GM12878 (cell line): ENCODE measurements at regions of chrX and their contacts with region 1.

Region 1: GRCh38 chrX:111445486-111445885 is 33.5 kb upstream of the DCX start:
- DNase-seq: no peak
- ATAC-seq: peak; percentile 74
- H3K4me3 ChIP-seq: no peak overlapping the region
- H3K27ac ChIP-seq: no peak overlapping the region
- H3K4me1 ChIP-seq: no peaks in the 10 kb centered on the region
- H3K27me3 ChIP-seq: peaks cover 1 to 3% of the 10 kb centered on the region in 2 experiments; a peak in 3 of 4 replicates
- CTCF ChIP-seq: peak; percentile 51; a peak in 4 of 6 replicates
- EP300 ChIP-seq: no peak
- POLR2A ChIP-seq: no peak
- RAD21 ChIP-seq: peak; percentile 47

Region 2: DNA sequence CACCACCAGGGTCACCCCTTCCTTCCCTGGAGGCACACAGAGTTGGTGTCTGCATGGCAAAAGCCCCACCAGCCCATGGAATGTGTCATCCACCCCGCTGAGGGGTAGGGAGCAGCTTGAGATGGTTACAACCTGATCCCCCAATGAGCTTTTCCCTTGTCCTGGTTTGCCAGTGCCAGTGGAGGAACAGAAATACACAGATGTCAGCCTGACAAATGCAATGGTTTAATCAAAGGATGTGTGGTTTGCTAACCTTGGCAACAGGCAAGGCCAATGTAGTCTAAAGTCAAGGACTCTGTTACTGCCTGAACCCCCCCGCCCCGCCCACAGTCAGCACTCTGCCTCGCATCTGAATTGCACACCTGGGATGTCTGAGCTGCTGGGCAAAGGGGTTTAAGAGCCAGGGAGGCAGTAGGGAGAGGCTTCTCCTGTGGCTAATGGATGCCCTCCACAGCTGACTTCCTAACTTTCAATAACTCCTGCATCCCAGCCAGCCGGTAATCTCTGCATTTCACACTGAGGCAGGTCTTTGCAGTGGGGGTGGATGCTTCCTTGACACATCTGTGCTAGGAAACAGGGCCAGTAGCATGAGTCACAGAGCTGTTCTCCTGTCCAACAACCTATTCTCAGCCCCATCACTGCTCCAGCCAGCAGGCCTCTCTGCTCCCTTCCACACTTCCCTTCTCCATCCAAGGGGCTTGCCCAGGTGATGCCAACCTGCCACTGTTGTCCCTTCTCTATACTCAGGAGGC is 1265.1 kb before region 1 on chrX:
- CTCF ChIA-PET with region 1: no interaction called
- POLR2A ChIA-PET with region 1: no interaction called
- RAD21 ChIA-PET with region 1: no interaction called
- SMC1A ChIA-PET with region 1: no interaction called
- in situ Hi-C with region 1: no loop called
- intact Hi-C with region 1: no loop called
- DNase-seq: no peak
- ATAC-seq: no peak; the same call in 2 of the 3 replicates
- H3K4me3 ChIP-seq: no peak overlapping the region
- H3K27ac ChIP-seq: no peak overlapping the region
- H3K4me1 ChIP-seq: peaks cover 4% of the 10 kb centered on the region
- H3K27me3 ChIP-seq: no peaks in the 10 kb centered on the region
- CTCF ChIP-seq: no peak
- EP300 ChIP-seq: no peak
- POLR2A ChIP-seq: no peak
- RAD21 ChIP-seq: no peak

Region 3: GRCh38 chrX:110992611-110993010 is 452.9 kb before region 1 on chrX:
- CTCF ChIA-PET with region 1: interaction called, 3 read pairs
- POLR2A ChIA-PET with region 1: no interaction called
- RAD21 ChIA-PET with region 1: no interaction called
- SMC1A ChIA-PET with region 1: interaction called, 5 read pairs
- in situ Hi-C with region 1: no loop called
- intact Hi-C with region 1: loop called (anchors 10 kb)
- DNase-seq: no peak
- ATAC-seq: peak; percentile 76
- H3K4me3 ChIP-seq: no peak overlapping the region
- H3K27ac ChIP-seq: no peak overlapping the region
- H3K4me1 ChIP-seq: no peaks in the 10 kb centered on the region
- H3K27me3 ChIP-seq: no peaks in the 10 kb centered on the region
- CTCF ChIP-seq: peak; percentile 49 to 61 (median 56)
- EP300 ChIP-seq: no peak
- POLR2A ChIP-seq: no peak
- RAD21 ChIP-seq: peak; percentile 40; the same call in 1 of the 2 replicates

Region 4: DNA sequence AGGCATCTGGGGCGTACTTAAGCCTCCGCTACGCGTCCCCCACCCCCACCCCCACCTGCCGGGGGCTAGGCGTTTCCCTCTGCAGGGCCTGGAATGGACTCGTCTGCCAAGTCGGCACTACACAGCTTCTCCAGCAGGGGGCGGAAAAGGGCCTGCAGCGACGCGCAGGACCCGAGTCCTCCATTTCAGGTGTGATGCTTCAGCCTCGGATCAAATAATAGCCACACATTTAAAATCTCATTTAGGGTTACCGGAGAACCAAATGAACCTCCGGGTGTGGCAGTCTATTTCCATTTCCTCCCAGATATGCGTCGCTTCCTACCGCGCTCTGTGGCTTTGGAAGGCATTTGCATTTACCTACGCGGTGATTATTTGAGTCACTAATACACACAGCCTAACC is 346.6 kb before region 1 on chrX:
- CTCF ChIA-PET with region 1: interaction called, 7 read pairs
- POLR2A ChIA-PET with region 1: no interaction called
- RAD21 ChIA-PET with region 1: no interaction called
- SMC1A ChIA-PET with region 1: interaction called, 3 read pairs
- in situ Hi-C with region 1: no loop called
- intact Hi-C with region 1: loop called (anchors 5 kb)
- DNase-seq: no peak
- ATAC-seq: peak; percentile 88
- H3K4me3 ChIP-seq: no peak overlapping the region
- H3K27ac ChIP-seq: no peak overlapping the region
- H3K4me1 ChIP-seq: no peaks in the 10 kb centered on the region
- H3K27me3 ChIP-seq: peaks cover 0 to 3% of the 10 kb centered on the region in 2 experiments; a peak in 1 of 4 replicates
- CTCF ChIP-seq: peak; percentile 68 to 87 (median 73)
- EP300 ChIP-seq: no peak
- POLR2A ChIP-seq: no peak
- RAD21 ChIP-seq: peak; percentile 64

Region 5: GRCh38 chrX:111168314-111168713 is 277.2 kb before region 1 on chrX:
- CTCF ChIA-PET with region 1: interaction called, 8 read pairs
- POLR2A ChIA-PET with region 1: no interaction called
- RAD21 ChIA-PET with region 1: no interaction called
- SMC1A ChIA-PET with region 1: no interaction called
- in situ Hi-C with region 1: no loop called
- intact Hi-C with region 1: loop called (anchors 5 kb)
- DNase-seq: no peak
- ATAC-seq: peak; percentile 49; the same call in 1 of the 3 replicates
- H3K4me3 ChIP-seq: no peak overlapping the region
- H3K27ac ChIP-seq: no peak overlapping the region
- H3K4me1 ChIP-seq: no peaks in the 10 kb centered on the region
- H3K27me3 ChIP-seq: no peaks in the 10 kb centered on the region
- CTCF ChIP-seq: peak in 2 of 3 experiments; percentile 9 to 29; a peak in 2 of 6 replicates
- EP300 ChIP-seq: no peak
- POLR2A ChIP-seq: no peak
- RAD21 ChIP-seq: peak; percentile 40; the same call in 1 of the 2 replicates

Region 6: GRCh38 chrX:111337067-111337637 is 108.3 kb before region 1 on chrX:
- CTCF ChIA-PET with region 1: no interaction called
- POLR2A ChIA-PET with region 1: no interaction called
- RAD21 ChIA-PET with region 1: no interaction called
- SMC1A ChIA-PET with region 1: no interaction called
- in situ Hi-C with region 1: no loop called
- intact Hi-C with region 1: no loop called
- DNase-seq: no peak
- ATAC-seq: no peak
- H3K4me3 ChIP-seq: no peak overlapping the region
- H3K27ac ChIP-seq: no peak overlapping the region
- H3K4me1 ChIP-seq: no peaks in the 10 kb centered on the region
- H3K27me3 ChIP-seq: no peaks in the 10 kb centered on the region; a peak in 1 of 4 replicates
- CTCF ChIP-seq: no peak
- EP300 ChIP-seq: no peak
- POLR2A ChIP-seq: no peak
- RAD21 ChIP-seq: no peak

Region 7: DNA sequence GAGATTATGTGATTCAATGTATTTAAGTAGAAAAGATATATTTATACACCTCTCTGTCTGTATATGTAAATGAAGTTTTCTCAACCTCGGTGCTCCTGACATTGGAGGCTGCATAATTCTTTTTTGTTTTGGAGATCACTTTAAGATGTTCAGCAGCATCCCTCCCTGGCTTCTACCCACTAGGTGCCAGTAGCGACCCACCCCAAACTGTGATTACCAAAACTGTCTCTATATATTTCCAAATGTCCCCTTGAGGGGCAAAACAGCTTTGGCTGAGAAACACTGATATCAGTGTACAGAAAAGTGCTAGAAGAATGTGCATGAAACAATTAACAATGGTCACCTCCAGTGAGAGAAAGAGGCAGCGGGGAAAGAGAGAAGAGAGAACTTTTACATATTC is 84.6 kb before region 1 on chrX:
- CTCF ChIA-PET with region 1: no interaction called
- POLR2A ChIA-PET with region 1: no interaction called
- RAD21 ChIA-PET with region 1: no interaction called
- SMC1A ChIA-PET with region 1: no interaction called
- in situ Hi-C with region 1: no loop called
- intact Hi-C with region 1: no loop called
- DNase-seq: no peak
- ATAC-seq: no peak
- H3K4me3 ChIP-seq: no peak overlapping the region
- H3K27ac ChIP-seq: no peak overlapping the region
- H3K4me1 ChIP-seq: no peaks in the 10 kb centered on the region
- H3K27me3 ChIP-seq: no peaks in the 10 kb centered on the region
- CTCF ChIP-seq: no peak; a peak in 1 of 6 replicates
- EP300 ChIP-seq: no peak
- POLR2A ChIP-seq: no peak
- RAD21 ChIP-seq: no peak

Region 8: DNA sequence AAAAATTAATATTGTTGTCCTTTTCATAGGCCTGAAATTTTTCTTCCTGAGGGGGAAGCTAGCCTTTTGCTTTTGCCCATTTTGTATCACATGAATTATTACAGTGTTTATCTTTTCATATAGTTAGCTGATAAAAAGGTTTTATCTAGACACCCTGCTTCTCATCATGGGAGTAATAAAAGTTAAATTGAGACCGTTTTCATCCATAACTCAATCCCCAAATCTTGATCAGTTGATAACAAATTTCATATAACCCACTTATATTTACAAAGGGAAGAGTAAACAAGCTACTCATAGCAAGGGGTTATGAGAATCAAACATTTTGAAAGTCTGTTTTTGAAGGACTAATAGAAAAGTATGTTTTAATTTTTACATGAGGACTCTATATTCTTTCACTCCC is 10.0 kb before region 1 on chrX:
- CTCF ChIA-PET with region 1: interaction called, 20 read pairs
- POLR2A ChIA-PET with region 1: no interaction called
- RAD21 ChIA-PET with region 1: interaction called, 3 read pairs
- SMC1A ChIA-PET with region 1: interaction called, 3 read pairs
- in situ Hi-C with region 1: no loop called
- intact Hi-C with region 1: no loop called
- DNase-seq: no peak
- ATAC-seq: no peak
- H3K4me3 ChIP-seq: no peak overlapping the region
- H3K27ac ChIP-seq: no peak overlapping the region
- H3K4me1 ChIP-seq: no peaks in the 10 kb centered on the region
- H3K27me3 ChIP-seq: no peaks in the 10 kb centered on the region; a peak in 1 of 4 replicates
- CTCF ChIP-seq: no peak
- EP300 ChIP-seq: no peak
- POLR2A ChIP-seq: no peak
- RAD21 ChIP-seq: no peak